ENCODE measurements at regions of chr2 and their contacts with region 1.

Region 1: GRCh38 chr2:181046833-181047232 is 66.4 kb downstream of the UBE2E3 start:
- DNase-seq: no peak
- ATAC-seq: no peak
- H3K4me3 ChIP-seq: no peak overlapping the region
- H3K27ac ChIP-seq: no peak overlapping the region
- H3K4me1 ChIP-seq: peaks cover 15% of the 10 kb centered on the region
- H3K27me3 ChIP-seq: no peaks in the 10 kb centered on the region
- CTCF ChIP-seq: no peak

Region 2: GRCh38 chr2:180991820-180992219 is 55.0 kb before region 1 on chr2:
- intact Hi-C with region 1: loop called in 1 of 2 experiments (anchors 10 kb)
- DNase-seq: no peak
- ATAC-seq: no peak
- H3K4me3 ChIP-seq: no peak overlapping the region
- H3K27ac ChIP-seq: no peak overlapping the region
- H3K4me1 ChIP-seq: peaks cover 66% of the 10 kb centered on the region
- H3K27me3 ChIP-seq: no peaks in the 10 kb centered on the region
- CTCF ChIP-seq: no peak

Region 3: GRCh38 chr2:181077128-181077709 is 30.4 kb after region 1 on chr2:
- intact Hi-C with region 1: no loop called
- DNase-seq: no peak
- ATAC-seq: peak in 2 of 4 donors; percentile 75 to 82
- H3K4me3 ChIP-seq: no peak overlapping the region
- H3K27ac ChIP-seq: no peak overlapping the region
- H3K4me1 ChIP-seq: peaks cover 7% of the 10 kb centered on the region
- H3K27me3 ChIP-seq: no peaks in the 10 kb centered on the region
- CTCF ChIP-seq: peak; percentile 65